ENCODE measurements at regions of chr2 and their contacts with region 1.

Region 1: DNA sequence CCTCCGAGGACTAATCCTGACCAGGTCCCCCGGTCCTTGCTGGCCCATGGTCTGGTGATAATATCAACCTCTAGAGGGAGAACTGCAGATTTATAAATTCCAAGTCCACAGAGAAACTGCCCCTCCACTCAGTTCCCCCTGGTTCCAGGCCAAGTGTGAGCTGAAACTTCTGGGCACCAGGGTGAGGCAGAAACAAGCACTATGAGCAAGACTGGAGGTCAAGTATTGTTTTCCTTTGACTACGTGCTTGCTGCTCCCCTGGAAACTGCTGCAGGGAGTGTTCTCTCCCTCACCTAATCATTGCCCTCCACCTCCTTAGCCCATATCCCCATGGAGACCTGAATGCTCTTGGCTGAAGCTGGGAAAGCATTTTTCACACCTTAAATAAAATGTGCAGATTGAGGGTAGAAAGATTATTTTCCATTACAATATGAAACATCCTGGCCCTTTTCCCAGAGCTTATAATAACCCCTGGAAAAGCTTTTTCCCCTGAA is 135.2 kb downstream of the RDH14 start:
- DNase-seq: no peak
- H3K4me3 ChIP-seq: no peak overlapping the region
- H3K27ac ChIP-seq: no peak overlapping the region
- H3K4me1 ChIP-seq: no peaks in the 10 kb centered on the region
- H3K27me3 ChIP-seq: no peaks in the 10 kb centered on the region
- CTCF ChIP-seq: no peak

Region 2: GRCh38 chr2:18404708-18405107 is 20.5 kb before region 1 on chr2:
- CTCF ChIA-PET with region 1: no interaction called
- POLR2A ChIA-PET with region 1: no interaction called
- intact Hi-C with region 1: loop called (anchors 1 kb)
- DNase-seq: no peak
- H3K4me3 ChIP-seq: no peak overlapping the region
- H3K27ac ChIP-seq: no peak overlapping the region
- H3K4me1 ChIP-seq: no peaks in the 10 kb centered on the region
- H3K27me3 ChIP-seq: no peaks in the 10 kb centered on the region
- CTCF ChIP-seq: peak; percentile 64

Region 3: DNA sequence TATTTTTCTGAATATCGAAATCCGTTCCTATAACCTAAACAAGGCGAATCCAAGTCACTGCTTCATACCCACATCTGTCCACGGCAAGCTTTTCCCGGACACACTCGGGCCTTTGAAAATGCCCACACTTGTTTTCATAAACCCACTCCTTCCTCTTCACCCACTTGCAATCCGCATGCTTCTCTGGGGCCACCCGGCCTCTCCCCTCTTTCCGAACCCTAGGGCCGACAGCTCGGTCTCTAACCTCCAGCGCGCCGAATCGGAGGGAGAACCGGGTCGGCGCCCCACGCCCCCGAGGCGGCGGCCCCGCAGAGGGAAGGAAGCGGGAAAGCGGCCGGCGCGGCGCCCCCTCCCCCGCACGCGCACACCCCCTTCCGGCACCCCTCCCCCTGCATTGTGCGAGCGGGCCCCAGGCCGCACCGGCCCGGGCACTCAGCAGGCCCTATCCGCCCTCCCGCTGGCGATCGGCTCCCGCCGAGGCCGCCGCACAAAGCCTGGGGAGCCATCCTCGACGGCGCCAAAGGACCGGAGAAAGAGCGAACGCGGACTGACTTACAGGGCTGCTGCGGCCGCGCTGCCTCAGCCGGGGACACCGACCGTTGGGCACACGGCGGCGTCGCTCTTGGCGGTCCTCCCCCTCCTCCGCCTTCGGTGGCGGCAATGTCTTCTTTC is 1924.9 kb after region 1 on chr2:
- CTCF ChIA-PET with region 1: no interaction called
- POLR2A ChIA-PET with region 1: interaction called, 10 read pairs
- intact Hi-C with region 1: no loop called
- DNase-seq: no peak
- H3K4me3 ChIP-seq: peak overlapping the region; percentile 81
- H3K27ac ChIP-seq: peak overlapping the region; percentile 88
- H3K4me1 ChIP-seq: peaks cover 47% of the 10 kb centered on the region
- H3K27me3 ChIP-seq: no peaks in the 10 kb centered on the region
- CTCF ChIP-seq: no peak